ENCODE measurements at regions of chr20 and their contacts with region 1.

Region 1: GRCh38 chr20:21074605-21075336 is 31.4 kb downstream of the LINC00237 start:
- DNase-seq: peak; percentile 34

Region 2: GRCh38 chr20:21583486-21584168 is 508.9 kb after region 1 on chr20:
- in situ Hi-C with region 1: loop called (anchors 25 kb)
- DNase-seq: no peak

Measured in KBM-7 (cell line).